ENCODE measurements at regions of chr1 and their contacts with region 1.

Region 1: GRCh38 chr1:32933742-32934322 is 30.8 kb downstream of the RNF19B start:
- DNase-seq: no peak
- ATAC-seq: no peak
- H3K4me3 Mint-ChIP-seq: no peak overlapping the region
- H3K27ac Mint-ChIP-seq: no peak overlapping the region
- H3K4me1 Mint-ChIP-seq: peaks cover 4% of the 10 kb centered on the region
- H3K27me3 Mint-ChIP-seq: no peaks in the 10 kb centered on the region
- CTCF ChIP-seq: no peak

Region 2: DNA sequence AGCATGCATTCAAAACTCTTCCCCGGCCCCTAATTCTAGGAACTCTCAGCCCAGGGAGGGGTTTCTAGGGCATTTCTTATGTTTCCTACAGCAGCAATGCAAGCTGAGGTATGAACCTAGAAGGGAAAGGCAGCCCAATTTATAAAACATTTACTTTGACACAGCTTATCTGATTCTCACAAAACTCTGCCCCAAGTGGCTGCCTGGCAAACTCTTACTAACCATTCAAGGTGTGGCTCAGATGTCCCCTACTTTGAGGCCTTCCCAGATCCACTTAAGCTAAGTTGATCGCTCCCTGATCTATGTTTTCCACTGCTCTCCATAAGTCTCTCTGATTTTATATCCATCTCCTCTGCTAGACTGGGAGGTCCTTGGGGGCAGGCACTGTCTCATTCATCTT is 67.5 kb after region 1 on chr1:
- CTCF ChIA-PET with region 1: interaction called, 92 read pairs
- POLR2A ChIA-PET with region 1: no interaction called
- intact Hi-C with region 1: no loop called
- DNase-seq: no peak
- ATAC-seq: no peak
- H3K4me3 Mint-ChIP-seq: no peak overlapping the region
- H3K27ac Mint-ChIP-seq: no peak overlapping the region
- H3K4me1 Mint-ChIP-seq: peaks cover 11% of the 10 kb centered on the region
- H3K27me3 Mint-ChIP-seq: no peaks in the 10 kb centered on the region
- CTCF ChIP-seq: no peak

Region 3: DNA sequence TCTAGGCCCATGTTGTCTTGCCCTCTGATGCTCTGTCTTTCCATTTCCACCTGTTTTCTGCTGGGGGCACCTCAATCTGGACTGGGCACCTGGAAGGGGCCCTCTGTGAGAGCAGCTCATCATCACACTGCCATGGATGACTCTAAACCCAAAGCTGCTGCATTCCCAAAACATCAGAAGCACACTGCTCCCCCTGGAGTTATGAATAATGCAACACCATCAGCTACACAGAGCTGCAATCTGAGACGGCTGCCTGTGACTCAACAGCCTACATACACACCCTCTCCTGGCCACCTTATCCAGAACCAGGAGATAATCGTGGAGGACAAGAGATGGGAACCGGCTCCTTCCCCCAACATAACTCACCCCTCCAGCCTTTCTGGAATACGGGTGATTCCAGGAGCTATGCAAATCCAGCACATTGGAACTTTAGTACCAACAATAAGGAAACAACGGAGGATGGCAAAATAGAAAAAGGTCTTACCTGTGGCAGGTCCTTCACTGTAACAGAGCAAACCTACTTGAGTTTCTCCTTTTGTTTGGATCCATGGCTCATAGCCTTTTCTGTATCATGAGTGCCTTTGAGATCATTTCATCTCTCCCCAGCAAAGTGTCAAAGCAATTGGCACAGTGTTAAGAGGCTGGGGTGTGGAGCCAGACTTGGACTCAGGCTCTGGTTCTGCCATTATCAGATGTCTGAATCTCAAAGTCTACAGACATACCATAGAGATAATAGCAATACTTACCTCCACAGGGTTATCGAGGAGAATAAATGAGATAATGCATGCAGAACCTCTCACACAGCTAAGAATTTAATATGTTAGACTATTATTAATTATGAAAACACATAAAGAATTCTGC is 73.6 kb after region 1 on chr1:
- CTCF ChIA-PET with region 1: interaction called, 92 read pairs
- POLR2A ChIA-PET with region 1: interaction called, 3 read pairs
- intact Hi-C with region 1: loop called (anchors 1 kb)
- DNase-seq: no peak
- ATAC-seq: peak; percentile 76
- H3K4me3 Mint-ChIP-seq: no peak overlapping the region
- H3K27ac Mint-ChIP-seq: no peak overlapping the region
- H3K4me1 Mint-ChIP-seq: no peaks in the 10 kb centered on the region
- H3K27me3 Mint-ChIP-seq: no peaks in the 10 kb centered on the region
- CTCF ChIP-seq: no peak

Region 4: DNA sequence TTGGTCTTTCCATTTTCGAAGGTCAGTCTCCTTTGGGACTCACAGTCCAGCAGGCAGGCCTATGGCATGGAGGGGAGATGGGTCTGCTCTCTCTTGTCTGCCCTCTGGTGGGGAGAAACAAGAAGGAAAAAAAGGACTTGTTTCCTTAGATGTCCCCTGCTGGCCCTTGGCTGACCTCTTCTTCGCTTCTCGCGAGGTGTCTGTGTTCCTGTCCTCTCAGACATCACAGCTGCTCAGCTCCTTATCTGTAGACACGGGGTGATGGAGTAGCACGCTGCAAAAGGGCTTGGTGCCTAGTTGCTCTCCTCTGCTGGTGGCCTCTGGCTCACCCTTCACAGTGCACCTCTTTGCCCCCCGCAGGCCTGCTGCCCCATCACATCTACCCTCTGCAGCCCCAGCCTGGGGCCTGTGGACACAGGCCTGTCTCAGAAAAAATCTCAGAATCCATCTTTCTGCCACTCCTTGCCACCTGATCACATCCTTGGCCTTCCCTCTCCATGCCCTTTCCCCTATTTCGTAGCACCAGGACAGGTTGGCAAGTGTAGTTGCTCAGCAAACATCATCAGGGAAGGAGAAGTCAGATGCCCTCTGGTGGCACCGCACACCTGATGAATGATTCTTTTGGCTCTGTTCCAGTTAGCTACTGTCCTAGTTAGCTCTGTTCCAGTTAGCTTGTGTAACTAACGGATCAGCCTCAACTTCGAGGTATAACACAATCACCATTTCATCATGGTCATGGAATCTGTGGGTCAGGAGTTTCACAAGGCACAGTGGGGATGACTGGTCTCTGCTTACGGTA is 121.6 kb after region 1 on chr1:
- CTCF ChIA-PET with region 1: interaction called, 79 read pairs
- POLR2A ChIA-PET with region 1: no interaction called
- intact Hi-C with region 1: loop called (anchors 1 kb)
- DNase-seq: no peak
- ATAC-seq: no peak
- H3K4me3 Mint-ChIP-seq: no peak overlapping the region
- H3K27ac Mint-ChIP-seq: no peak overlapping the region
- H3K4me1 Mint-ChIP-seq: peaks cover 16% of the 10 kb centered on the region
- H3K27me3 Mint-ChIP-seq: no peaks in the 10 kb centered on the region
- CTCF ChIP-seq: no peak

Region 5: GRCh38 chr1:33161061-33161681 is 227.3 kb after region 1 on chr1:
- CTCF ChIA-PET with region 1: no interaction called
- POLR2A ChIA-PET with region 1: no interaction called
- intact Hi-C with region 1: no loop called
- DNase-seq: no peak
- ATAC-seq: no peak
- H3K4me3 Mint-ChIP-seq: no peak overlapping the region
- H3K27ac Mint-ChIP-seq: no peak overlapping the region
- H3K4me1 Mint-ChIP-seq: no peaks in the 10 kb centered on the region
- H3K27me3 Mint-ChIP-seq: no peaks in the 10 kb centered on the region
- CTCF ChIP-seq: no peak

Measured in activated B cell treated with CpG ODN at 0.5 μM for 24 hours (primary cell).